ENCODE measurements at regions of chr9 and their contacts with region 1.

Region 1: DNA sequence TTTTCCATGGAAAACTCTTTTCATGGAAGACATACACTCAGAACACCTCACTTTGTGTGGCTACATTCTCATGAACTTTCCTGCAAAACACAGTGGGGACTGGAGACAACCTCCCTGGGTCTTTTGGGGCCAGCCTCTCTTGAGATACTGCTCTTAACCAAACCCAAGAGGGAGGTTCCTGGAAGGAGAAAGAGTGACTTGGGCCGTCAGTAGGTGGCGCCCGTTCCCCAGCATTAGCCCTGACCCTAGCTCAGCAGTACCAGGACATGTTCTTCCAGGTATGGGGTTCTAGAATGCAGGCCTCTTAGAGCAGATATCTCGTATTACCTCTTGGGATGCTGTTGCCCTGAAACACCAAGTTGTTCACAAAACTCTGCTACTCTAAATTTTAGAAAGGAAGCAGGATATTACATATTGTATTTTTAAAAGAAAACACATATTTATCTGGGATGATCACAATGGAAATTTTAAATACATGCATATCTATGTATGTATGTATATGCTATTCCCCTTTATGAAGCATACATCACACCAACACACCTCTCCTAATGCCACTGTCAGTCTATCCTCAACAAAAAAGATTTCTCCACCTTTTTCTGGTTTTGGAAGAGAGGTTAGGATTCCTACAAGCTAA is 15.8 kb upstream of the GLIS3 start:
- DNase-seq: peak in 9 of 10 donors; percentile 52 to 95 (median 81)

Region 2: GRCh38 chr9:4366591-4367330 is 51.1 kb after region 1 on chr9:
- intact Hi-C with region 1: loop called (anchors 1 kb)
- DNase-seq: peak; percentile 46 to 87 (median 60)